Activated T-helper 1 cell treated with anti-CD3 and anti-CD28 coated beads, Interleukin-12 subunit alpha, Interleukin-12 subunit beta, Interleukin-2, Interleukin-4 antibody, amounts not matched to agents 30 ng/mL and 10 ng/mL and 1 ng/mL, durations not matched to agents 14 hours and 24 hours and 36 hours (primary cell): ENCODE measurements at regions of chr10 and their contacts with region 1.

Region 1: GRCh38 chr10:89367529-89367928 is 10.3 kb upstream of the IFIT1B start:
- DNase-seq: no peak
- H3K4me3 Mint-ChIP-seq: no peak overlapping the region
- H3K27ac Mint-ChIP-seq: no peak overlapping the region
- H3K4me1 Mint-ChIP-seq: peaks cover 5% of the 10 kb centered on the region
- H3K27me3 Mint-ChIP-seq: peaks cover 24% of the 10 kb centered on the region

Region 2: DNA sequence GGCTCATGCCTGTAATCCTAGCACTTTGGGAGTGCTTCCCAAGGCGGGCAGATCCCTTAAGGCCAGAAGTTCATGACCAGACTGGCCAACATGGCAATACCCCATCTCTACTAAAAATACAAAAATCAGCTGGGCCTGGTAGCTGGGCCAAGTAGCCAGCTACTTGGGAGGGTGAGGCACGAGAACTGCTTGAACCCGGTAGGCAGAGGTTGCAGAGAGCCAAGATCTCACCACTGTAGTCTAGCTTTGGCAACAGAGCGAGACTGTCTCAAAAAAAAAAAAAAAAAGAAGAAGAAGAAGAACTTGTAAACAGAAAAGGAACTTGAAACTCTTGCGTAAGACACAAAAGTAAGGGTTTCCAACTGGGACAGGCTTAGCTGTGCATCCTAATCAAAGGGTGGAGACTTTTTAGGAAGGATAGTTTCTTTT is 71.3 kb before region 1 on chr10:
- intact Hi-C with region 1: loop called (anchors 1 kb)
- DNase-seq: no peak
- H3K4me3 Mint-ChIP-seq: no peak overlapping the region
- H3K27ac Mint-ChIP-seq: no peak overlapping the region
- H3K4me1 Mint-ChIP-seq: peaks cover 15% of the 10 kb centered on the region
- H3K27me3 Mint-ChIP-seq: peaks cover 20% of the 10 kb centered on the region

Region 3: GRCh38 chr10:89426230-89426868 is 58.8 kb after region 1 on chr10:
- intact Hi-C with region 1: no loop called
- DNase-seq: no peak
- H3K4me3 Mint-ChIP-seq: no peak overlapping the region
- H3K27ac Mint-ChIP-seq: no peak overlapping the region
- H3K4me1 Mint-ChIP-seq: no peaks in the 10 kb centered on the region
- H3K27me3 Mint-ChIP-seq: peaks cover 5% of the 10 kb centered on the region